Naive thymus-derived CD4-positive, alpha-beta T cell (primary cell): ENCODE measurements at regions of chr1 and their contacts with region 1.

Region 1: DNA sequence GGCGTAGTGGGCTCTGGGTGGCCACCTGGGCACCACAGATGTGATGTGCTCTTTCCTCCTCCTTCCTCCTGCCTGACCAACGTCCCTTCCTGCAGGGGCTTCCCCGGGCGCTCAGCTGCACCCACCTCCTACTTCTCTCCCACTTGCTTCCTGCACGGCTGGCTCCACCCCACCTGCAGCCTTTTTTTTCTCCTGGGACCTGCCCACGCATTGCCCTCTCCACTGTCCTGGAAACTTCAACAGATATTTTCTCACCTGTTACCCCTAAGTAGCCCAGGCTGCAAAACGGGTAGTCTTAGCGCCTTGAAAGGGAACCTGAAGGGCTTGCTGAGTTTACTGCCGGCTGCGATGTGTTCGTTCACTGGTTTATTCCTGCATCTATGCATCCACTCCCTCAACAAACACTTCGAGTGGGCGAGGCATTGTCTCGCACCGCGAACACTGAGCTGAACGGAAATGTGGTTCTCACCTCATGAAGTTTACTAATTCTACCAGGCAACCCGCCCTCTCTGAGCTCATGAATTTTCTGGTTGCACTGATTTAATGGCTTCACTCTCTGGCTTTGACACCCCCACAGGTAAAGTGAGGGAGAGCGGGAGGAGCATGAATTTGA is 23.6 kb downstream of the ZBTB18 start:
- DNase-seq: peak; percentile 36 to 91 (median 86)
- ATAC-seq: peak; percentile 96
- H3K4me3 ChIP-seq: peak overlapping the region; percentile 45
- H3K4me3 Mint-ChIP-seq: peak overlapping the region; percentile 75 to 91 (median 88)
- H3K27ac ChIP-seq: peak overlapping the region; percentile 73
- H3K27ac Mint-ChIP-seq: peak overlapping the region; percentile 50 to 99 (median 97)
- H3K4me1 ChIP-seq: peaks cover 16 to 32% of the 10 kb centered on the region in 2 donors
- H3K4me1 Mint-ChIP-seq: peaks cover 19 to 64% (median 54%) of the 10 kb centered on the region in 7 donors
- H3K27me3 ChIP-seq: no peaks in the 10 kb centered on the region
- H3K27me3 Mint-ChIP-seq: peaks cover 0 to 20% (median 0%) of the 10 kb centered on the region in 5 donors

Region 2: GRCh38 chr1:244002721-244003120 is 71.9 kb before region 1 on chr1:
- CTCF ChIA-PET with region 1: no interaction called
- POLR2A ChIA-PET with region 1: no interaction called
- intact Hi-C with region 1: loop called in 1 of 2 experiments (anchors 2 kb)
- DNase-seq: peak in 3 of 9 donors; percentile 2 to 18 (median 12)
- ATAC-seq: peak; percentile 48
- H3K4me3 ChIP-seq: no peak overlapping the region
- H3K4me3 Mint-ChIP-seq: peak overlapping the region; percentile 8 to 59 (median 34)
- H3K27ac ChIP-seq: no peak overlapping the region
- H3K27ac Mint-ChIP-seq: peak overlapping the region in 8 of 9 donors; percentile 1 to 71 (median 8)
- H3K4me1 ChIP-seq: peaks cover 0 to 16% of the 10 kb centered on the region in 2 donors
- H3K4me1 Mint-ChIP-seq: peaks cover 15 to 28% (median 21%) of the 10 kb centered on the region in 7 donors
- H3K27me3 ChIP-seq: no peaks in the 10 kb centered on the region
- H3K27me3 Mint-ChIP-seq: no peaks in the 10 kb centered on the region

Region 3: GRCh38 chr1:244100704-244101453 is 26.2 kb after region 1 on chr1:
- CTCF ChIA-PET with region 1: no interaction called
- POLR2A ChIA-PET with region 1: interaction called, 8 read pairs
- intact Hi-C with region 1: loop called in 1 of 2 experiments (anchors 2 kb)
- DNase-seq: peak in 5 of 9 donors; percentile 6 to 27 (median 23)
- ATAC-seq: peak; percentile 41
- H3K4me3 ChIP-seq: no peak overlapping the region
- H3K4me3 Mint-ChIP-seq: peak overlapping the region in 9 of 10 donors; percentile 21 to 81 (median 70)
- H3K27ac ChIP-seq: no peak overlapping the region
- H3K27ac Mint-ChIP-seq: peak overlapping the region in 7 of 9 donors; percentile 7 to 81 (median 44)
- H3K4me1 ChIP-seq: peaks cover 0 to 16% of the 10 kb centered on the region in 2 donors
- H3K4me1 Mint-ChIP-seq: peaks cover 8 to 27% (median 22%) of the 10 kb centered on the region in 7 donors
- H3K27me3 ChIP-seq: no peaks in the 10 kb centered on the region
- H3K27me3 Mint-ChIP-seq: peaks cover 0 to 22% (median 11%) of the 10 kb centered on the region in 5 donors

Region 4: DNA sequence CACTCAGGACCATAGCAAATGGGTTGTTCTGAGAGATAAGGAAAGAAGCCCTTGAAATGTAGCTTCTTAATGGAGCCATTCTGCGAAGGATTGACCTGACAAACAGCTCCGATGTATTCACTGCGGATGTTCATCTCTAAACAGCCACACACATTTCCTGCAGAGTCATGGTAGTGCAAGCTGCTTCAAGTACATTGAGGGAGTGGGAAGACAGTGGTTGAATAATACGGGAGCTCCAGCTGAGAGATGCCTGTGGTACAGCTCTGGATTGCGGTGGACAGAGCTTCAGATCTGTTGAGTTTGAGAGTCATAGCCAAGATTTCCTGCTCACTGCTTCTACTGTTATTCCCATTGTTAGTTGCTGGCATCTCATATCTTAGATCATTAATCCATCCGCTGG is 63.1 kb after region 1 on chr1:
- CTCF ChIA-PET with region 1: no interaction called
- POLR2A ChIA-PET with region 1: interaction called, 12 read pairs
- intact Hi-C with region 1: loop called in 1 of 2 experiments (anchors 1 kb)
- DNase-seq: peak in 1 of 9 donors; percentile 21
- ATAC-seq: peak; percentile 32
- H3K4me3 ChIP-seq: peak overlapping the region; percentile 34
- H3K4me3 Mint-ChIP-seq: peak overlapping the region; percentile 67 to 89 (median 78)
- H3K27ac ChIP-seq: no peak overlapping the region
- H3K27ac Mint-ChIP-seq: no peak overlapping the region
- H3K4me1 ChIP-seq: no peaks in the 10 kb centered on the region
- H3K4me1 Mint-ChIP-seq: peaks cover 9 to 13% (median 12%) of the 10 kb centered on the region in 7 donors
- H3K27me3 ChIP-seq: no peaks in the 10 kb centered on the region
- H3K27me3 Mint-ChIP-seq: peaks cover 0 to 30% (median 12%) of the 10 kb centered on the region in 5 donors